ENCODE measurements at regions of chr17 and their contacts with region 1.

Region 1: GRCh38 chr17:7021993-7022778 is 664 bp upstream of the BCL6B start:
- DNase-seq: peak; percentile 86
- CTCF ChIP-seq: peak; percentile 91

Region 2: DNA sequence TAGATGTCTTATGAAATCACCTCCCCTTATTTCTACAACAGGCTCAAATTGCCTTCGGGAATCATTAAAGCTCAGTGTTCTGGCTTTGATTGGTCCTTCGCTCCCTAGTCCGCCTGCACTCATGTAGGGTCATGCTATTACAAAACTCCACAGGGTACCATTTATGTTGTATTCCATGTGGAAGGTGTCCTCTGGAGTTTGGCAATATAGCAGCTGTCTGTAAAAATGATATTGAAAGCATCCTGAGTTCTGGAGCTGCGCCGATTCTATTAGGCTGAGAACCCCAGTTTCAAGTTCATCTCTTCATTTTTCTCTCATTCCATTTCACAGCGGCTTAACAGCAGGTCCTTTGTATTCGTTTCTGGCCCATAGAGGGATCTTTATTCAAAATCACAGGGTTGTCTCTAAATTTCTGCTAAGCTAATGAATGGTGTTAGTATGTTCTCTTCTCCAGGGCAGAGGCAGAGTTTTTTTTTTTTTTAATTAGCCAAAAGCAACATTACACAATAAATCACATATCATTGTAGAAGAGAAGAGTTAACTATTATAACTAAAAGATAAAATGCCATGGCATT is 118.8 kb before region 1 on chr17:
- CTCF ChIA-PET with region 1: interaction called, 10 read pairs
- POLR2A ChIA-PET with region 1: no interaction called
- DNase-seq: no peak
- CTCF ChIP-seq: no peak

Region 3: GRCh38 chr17:7035591-7036368 is 13.6 kb after region 1 on chr17 and contains the start of gene SLC16A13:
- CTCF ChIA-PET with region 1: interaction called, 16 read pairs
- POLR2A ChIA-PET with region 1: interaction called, 4 read pairs
- DNase-seq: peak; percentile 100
- CTCF ChIP-seq: no peak

Region 4: GRCh38 chr17:7833795-7834541 is 811.8 kb after region 1 on chr17 and contains the start of gene KDM6B:
- CTCF ChIA-PET with region 1: no interaction called
- POLR2A ChIA-PET with region 1: no interaction called
- DNase-seq: peak; percentile 93
- CTCF ChIP-seq: no peak